ENCODE measurements at regions of chr13 and their contacts with region 1.

Region 1: GRCh38 chr13:59391696-59392095 is 772.0 kb downstream of the DIAPH3 start:
- DNase-seq: no peak
- H3K4me3 ChIP-seq: no peak overlapping the region
- H3K27ac ChIP-seq: no peak overlapping the region
- H3K4me1 ChIP-seq: peaks cover 5 to 10% (median 8%) of the 10 kb centered on the region in 4 donors
- H3K27me3 ChIP-seq: no peaks in the 10 kb centered on the region
- CTCF ChIP-seq: peak; percentile 77 to 87 (median 80)
- EP300 ChIP-seq: no peak
- POLR2A ChIP-seq: no peak

Region 2: DNA sequence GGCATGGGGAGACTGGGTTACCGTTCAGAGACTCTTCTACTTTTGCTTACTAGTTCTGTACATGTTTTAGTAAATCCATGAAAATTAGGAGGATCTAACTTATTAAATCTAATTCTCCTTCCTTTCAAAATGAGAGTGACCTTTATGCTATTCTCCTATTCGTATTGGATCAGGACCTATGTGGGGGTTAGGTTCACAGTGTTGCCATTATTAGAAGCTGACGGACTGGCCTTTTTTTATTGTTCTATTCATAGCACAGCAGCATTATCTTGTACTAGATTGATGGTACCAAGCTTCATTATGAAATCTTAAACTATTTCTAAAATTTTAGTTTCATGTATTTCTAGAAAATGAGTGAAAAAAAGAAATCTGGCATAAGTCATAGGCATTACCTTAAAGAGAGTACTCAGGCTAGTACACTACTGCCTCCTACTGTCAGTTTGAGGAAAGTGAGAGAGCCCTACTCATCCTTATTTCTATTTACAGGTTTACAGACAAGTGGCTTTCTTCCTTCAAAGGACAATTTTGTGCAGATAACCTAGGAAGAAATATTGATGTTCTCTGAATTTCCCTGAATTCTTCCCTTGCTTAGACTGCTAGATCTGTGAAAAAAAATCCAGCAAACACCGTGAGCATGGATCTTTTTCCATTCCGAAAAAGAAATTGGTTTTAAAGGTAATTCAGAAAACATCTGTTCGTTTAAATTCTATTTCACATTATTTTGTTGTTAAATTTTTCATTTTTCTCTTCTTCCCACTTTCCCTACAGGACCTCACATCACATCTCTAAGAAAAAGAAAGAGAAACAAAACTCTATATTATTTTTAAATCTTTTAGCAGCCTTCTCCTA is 286.5 kb after region 1 on chr13:
- intact Hi-C with region 1: loop called (anchors 2 kb)
- DNase-seq: no peak
- H3K4me3 ChIP-seq: no peak overlapping the region
- H3K27ac ChIP-seq: no peak overlapping the region
- H3K4me1 ChIP-seq: peaks cover 6 to 18% (median 9%) of the 10 kb centered on the region in 4 donors
- H3K27me3 ChIP-seq: no peaks in the 10 kb centered on the region
- CTCF ChIP-seq: peak; percentile 68 to 88 (median 76)
- EP300 ChIP-seq: no peak
- POLR2A ChIP-seq: no peak

Region 3: GRCh38 chr13:59771272-59771671 is 379.6 kb after region 1 on chr13:
- intact Hi-C with region 1: loop called (anchors 5 kb)
- DNase-seq: no peak
- H3K4me3 ChIP-seq: no peak overlapping the region
- H3K27ac ChIP-seq: no peak overlapping the region
- H3K4me1 ChIP-seq: peaks cover 0 to 37% (median 29%) of the 10 kb centered on the region in 4 donors
- H3K27me3 ChIP-seq: no peaks in the 10 kb centered on the region
- CTCF ChIP-seq: peak; percentile 47 to 61 (median 55)
- EP300 ChIP-seq: no peak
- POLR2A ChIP-seq: no peak

Region 4: DNA sequence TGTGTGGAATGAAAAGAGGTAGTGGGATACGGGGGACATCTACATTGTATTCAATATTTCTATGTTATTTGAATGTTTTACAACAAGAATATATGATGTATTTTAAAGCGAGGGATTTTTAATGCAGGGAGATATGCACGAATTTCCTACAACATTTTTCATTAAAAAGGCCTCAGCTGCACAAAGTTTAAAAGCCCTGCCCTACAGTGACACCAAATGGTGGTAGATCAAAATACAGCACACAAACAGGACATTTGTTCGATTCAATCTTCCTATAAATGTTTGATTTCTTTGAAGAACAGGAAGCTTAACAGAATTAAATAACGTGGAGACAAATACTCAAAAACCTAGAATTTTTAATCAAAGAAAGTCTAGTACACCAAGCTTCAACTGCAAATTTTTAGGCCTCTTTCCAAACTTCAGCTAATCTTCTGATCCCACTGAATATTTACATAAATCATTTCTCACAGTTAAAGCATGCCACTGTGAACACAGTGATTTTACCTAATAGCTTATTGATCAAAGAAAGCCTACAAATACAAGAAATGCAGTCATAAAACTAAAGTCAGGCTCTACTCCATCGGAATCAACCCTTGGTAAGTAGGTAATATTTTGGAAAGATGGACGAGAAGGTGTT is 514.8 kb after region 1 on chr13:
- intact Hi-C with region 1: loop called (anchors 5 kb)
- DNase-seq: no peak
- H3K4me3 ChIP-seq: no peak overlapping the region
- H3K27ac ChIP-seq: no peak overlapping the region
- H3K4me1 ChIP-seq: no peaks in the 10 kb centered on the region
- H3K27me3 ChIP-seq: no peaks in the 10 kb centered on the region
- CTCF ChIP-seq: peak; percentile 48 to 61 (median 57)
- EP300 ChIP-seq: no peak
- POLR2A ChIP-seq: no peak

Region 5: GRCh38 chr13:59931612-59932011 is 539.9 kb after region 1 on chr13:
- intact Hi-C with region 1: no loop called
- DNase-seq: no peak
- H3K4me3 ChIP-seq: no peak overlapping the region
- H3K27ac ChIP-seq: no peak overlapping the region
- H3K4me1 ChIP-seq: no peaks in the 10 kb centered on the region
- H3K27me3 ChIP-seq: no peaks in the 10 kb centered on the region
- CTCF ChIP-seq: no peak
- EP300 ChIP-seq: no peak
- POLR2A ChIP-seq: no peak

Region 6: DNA sequence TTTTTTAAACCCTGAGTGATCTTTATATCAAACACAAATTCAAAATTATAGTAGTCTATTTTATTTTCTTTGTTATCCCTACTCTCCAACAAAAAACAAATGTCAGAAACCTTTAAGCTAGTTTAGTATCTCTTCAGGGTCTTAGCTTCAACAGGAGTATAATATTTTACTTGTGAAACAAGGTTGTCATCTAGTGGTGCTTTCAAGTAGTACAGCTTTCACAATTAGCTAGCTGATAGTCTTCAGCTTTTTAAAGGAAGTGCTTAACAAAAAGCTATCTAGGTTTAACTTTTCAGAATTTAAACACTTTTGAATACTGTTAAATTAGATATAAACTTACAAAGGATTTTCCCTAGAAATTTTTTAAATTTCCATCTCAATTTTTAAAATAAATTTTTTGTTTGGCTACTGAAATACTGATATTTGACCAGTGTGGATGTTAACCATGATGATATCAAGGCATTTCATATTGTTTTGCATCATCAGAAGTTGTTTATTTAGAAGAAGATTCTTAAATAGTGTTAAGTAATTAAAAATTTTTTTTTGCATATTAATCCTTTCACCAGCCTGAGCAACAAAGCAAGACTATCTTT is 1039.5 kb after region 1 on chr13:
- intact Hi-C with region 1: loop called (anchors 10 kb)
- DNase-seq: no peak
- H3K4me3 ChIP-seq: no peak overlapping the region
- H3K27ac ChIP-seq: no peak overlapping the region
- H3K4me1 ChIP-seq: no peaks in the 10 kb centered on the region
- H3K27me3 ChIP-seq: no peaks in the 10 kb centered on the region
- CTCF ChIP-seq: peak; percentile 86 to 93 (median 92)
- EP300 ChIP-seq: no peak
- POLR2A ChIP-seq: no peak

Measured in esophagus muscularis mucosa (tissue), 4 donors.